Ovary (tissue), 10 donors: ENCODE measurements at regions of chr19 and their contacts with region 1.

Region 1: DNA sequence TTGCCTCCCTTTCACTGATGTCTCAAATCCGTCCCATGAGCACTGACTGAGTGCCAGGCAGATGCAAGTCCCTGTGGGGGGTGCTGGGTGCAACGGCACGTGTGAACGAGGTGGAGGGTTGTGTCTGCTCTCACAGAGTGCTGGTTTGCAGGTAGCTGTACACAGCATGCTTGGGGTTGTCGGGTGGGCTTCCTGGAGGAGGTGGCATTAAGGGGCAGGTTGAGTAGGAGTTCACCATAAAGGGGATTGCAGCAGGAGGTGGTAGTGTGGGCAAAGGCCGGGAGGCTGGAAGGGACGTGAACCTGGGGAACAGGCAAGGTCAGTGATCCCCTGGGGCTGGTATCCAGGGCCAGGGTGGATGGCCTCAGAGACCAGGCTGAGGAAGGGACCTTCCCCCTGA is 17.2 kb downstream of the COLGALT1 start:
- DNase-seq: no peak
- H3K4me3 ChIP-seq: no peak overlapping the region
- H3K27ac ChIP-seq: no peak overlapping the region
- H3K4me1 ChIP-seq: no peaks in the 10 kb centered on the region
- H3K27me3 ChIP-seq: no peaks in the 10 kb centered on the region
- CTCF ChIP-seq: no peak
- EP300 ChIP-seq: no peak
- POLR2A ChIP-seq: no peak

Region 2: DNA sequence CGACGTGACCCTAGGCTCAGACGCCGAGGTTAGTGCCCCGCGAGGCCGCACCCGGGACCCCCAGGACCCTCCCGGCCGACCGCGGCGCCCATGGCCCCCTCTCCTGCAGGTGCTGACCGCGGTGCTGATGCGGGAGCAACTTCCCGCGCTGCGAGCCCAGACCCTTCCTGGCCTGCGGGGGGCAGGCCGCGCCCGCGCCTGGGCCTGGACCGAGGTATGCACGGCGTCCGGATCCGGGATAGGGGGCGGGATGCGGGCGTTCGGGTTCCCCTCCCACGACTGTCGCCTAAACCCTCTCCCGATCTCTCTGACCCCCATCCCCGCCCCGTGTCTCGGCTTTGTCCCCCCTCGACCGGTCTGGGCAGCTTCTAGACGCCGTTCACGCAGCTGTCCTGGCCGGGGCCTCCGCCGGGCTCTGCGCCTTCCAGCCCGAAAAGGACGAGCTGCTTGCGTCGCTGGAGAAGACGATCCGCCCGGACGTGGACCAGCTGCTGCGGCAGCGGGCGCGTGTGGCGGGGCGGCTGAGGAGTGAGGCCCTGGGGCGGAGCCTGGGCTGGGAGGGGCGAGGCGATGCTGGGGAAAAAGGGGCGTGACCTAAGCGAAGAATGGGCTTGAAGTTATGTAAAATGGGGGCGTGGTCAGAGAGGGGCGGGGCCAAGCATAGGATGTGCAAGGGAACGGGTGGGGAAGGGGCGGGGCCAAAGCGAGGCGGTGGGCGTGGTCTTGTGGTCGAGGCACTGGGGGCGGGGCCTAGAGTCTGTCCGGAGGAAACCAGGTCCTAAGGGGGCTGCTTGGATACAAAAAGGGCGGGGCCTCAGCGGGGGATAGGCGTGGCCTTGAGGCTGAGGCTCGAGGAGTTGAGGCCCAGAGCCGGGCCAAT is 33.2 kb before region 1 on chr19:
- intact Hi-C with region 1: loop called in 1 of 4 experiments (anchors 2 kb)
- DNase-seq: peak; percentile 99 to 100 (median 100)
- H3K4me3 ChIP-seq: peak overlapping the region; percentile 49
- H3K27ac ChIP-seq: peak overlapping the region; percentile 15 to 84
- H3K4me1 ChIP-seq: no peaks in the 10 kb centered on the region
- H3K27me3 ChIP-seq: no peaks in the 10 kb centered on the region
- CTCF ChIP-seq: peak; percentile 15 to 64 (median 23)
- EP300 ChIP-seq: no peak
- POLR2A ChIP-seq: peak; percentile 65